ENCODE measurements at regions of chr17 and their contacts with region 1.

Region 1: DNA sequence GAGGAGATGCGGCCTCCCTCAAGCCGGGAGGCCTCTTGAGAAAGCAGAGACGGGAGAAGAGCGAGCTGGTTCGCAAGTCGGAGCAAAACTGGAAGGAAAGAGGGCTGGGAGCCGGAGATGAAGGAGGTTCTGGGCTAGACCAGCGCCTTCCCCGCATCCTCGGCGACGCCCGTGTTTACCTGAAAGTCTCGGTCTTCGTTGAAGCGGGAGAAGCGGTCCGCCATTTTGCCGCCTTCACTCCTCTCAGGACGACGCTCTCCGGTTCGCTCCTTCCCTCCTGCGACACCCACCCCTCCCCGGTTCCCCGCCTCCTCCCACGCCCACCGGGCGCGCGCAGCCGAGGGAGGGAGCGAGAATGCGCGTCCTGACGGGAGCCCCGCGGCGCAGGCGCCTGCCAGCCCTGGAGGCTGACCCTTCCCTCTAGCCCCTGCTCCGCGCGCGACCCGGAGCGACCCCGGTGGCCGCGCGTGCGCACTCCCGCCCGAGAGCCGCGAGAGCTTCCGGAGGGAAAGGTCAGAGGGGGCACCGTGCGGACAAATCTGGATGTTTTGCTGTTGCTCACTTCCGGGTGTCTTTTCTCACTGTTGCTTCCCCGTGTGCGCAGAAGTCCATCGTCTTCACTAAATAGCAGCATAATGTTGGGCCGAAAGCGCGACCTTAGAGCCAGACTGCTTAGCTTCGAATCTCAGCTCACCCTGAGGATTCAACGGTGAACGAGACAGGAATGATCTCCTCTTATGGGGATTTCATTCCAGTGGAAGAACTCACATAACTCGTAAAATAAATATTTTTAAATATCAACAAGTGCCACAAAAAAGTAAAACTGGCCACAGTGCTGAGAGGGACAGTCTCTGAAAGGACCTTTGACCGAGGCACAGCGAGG is at the start of gene GPATCH8:
- DNase-seq: peak; percentile 92 to 96 (median 95)
- H3K4me3 ChIP-seq: peak within 1 kb of the TSS; percentile 69 to 82 (median 75)
- H3K27ac ChIP-seq: peak within 1 kb of the TSS; percentile 18 to 94 (median 84)
- H3K4me1 ChIP-seq: peaks cover 18 to 47% of the 10 kb centered on the region in 2 donors
- H3K27me3 ChIP-seq: no peaks in the 10 kb centered on the region
- CTCF ChIP-seq: no peak
- POLR2A ChIP-seq: peak; percentile 10 to 78
- total RNA-seq, gene GPATCH8: 13.6 to 33.6 (median 29.3) TPM

Region 2: DNA sequence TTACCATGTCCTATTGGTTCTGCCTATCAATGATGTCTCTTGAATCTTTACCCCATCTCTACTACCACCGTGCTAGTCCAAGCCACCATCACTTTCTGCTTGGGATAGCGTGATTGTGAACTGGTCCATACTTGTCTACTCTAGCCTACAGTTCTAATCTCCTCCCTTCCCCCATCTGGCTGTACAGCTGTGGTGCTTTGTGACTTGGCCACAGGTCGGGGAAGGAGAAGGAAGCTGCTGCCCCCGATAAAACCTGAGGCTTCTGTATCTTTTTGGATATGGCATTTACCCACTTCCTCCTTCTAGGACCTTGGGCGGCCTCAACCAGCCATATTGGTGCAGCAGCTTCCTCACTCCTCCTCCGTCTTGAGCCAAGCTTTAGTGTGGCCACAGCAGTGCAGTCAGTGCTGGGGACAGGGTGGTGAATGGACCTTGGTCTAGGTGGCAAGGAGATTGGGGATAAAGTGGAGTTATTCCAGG is 113.6 kb before region 1 on chr17:
- intact Hi-C with region 1: loop called in 1 of 2 experiments (anchors 10 kb)
- DNase-seq: peak in 1 of 7 donors; percentile 10
- H3K4me3 ChIP-seq: no peak overlapping the region
- H3K27ac ChIP-seq: no peak overlapping the region
- H3K4me1 ChIP-seq: peaks cover 0 to 11% of the 10 kb centered on the region in 2 donors
- H3K27me3 ChIP-seq: peaks cover 4% of the 10 kb centered on the region
- CTCF ChIP-seq: no peak
- POLR2A ChIP-seq: no peak

Region 3: GRCh38 chr17:44438636-44439035 is 64.8 kb before region 1 on chr17:
- intact Hi-C with region 1: no loop called
- DNase-seq: peak in 1 of 7 donors; percentile 60
- H3K4me3 ChIP-seq: no peak overlapping the region
- H3K27ac ChIP-seq: no peak overlapping the region
- H3K4me1 ChIP-seq: peaks cover 0 to 10% of the 10 kb centered on the region in 2 donors
- H3K27me3 ChIP-seq: no peaks in the 10 kb centered on the region
- CTCF ChIP-seq: no peak
- POLR2A ChIP-seq: no peak

Region 4: DNA sequence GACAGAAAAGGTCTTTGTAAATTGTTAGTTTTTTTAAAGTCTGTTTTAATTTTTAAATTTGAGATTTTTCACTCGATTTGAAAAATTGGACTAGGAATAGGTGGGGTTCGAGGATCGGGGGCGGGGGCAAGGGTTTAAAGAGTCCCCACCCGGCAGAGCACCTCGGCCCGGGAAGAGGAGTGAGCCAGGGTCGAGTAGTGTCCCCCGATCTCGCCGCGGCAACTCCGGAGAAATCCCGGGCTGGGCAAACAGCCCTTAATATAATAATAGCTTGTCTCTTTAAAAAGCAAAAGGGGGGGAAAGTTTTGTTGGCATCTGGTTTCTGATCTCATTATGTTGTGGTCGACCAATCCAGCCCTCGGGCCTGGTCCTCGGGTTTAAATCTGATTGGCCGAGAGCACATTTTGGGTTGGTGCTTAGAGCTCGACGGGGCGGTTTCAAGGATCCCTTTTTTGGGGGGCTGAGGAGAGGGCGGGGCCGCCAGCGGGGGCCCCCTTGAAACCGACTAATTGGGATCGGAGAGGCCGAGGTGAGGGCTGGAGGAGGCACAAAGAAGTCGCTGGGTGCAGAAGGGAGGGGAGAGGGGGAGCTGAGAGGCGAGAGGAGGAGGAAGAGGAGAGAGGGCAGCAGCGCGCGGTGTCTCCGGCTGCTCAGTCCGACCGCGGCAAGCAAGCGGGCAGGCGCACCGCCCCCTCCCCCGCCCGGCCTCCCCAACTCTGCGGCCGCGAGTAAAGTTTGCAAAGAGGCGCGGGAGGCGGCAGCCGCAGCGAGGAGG is 53.6 kb after region 1 on chr17 and contains the start of gene FZD2:
- intact Hi-C with region 1: no loop called
- DNase-seq: peak; percentile 72 to 91 (median 82)
- H3K4me3 ChIP-seq: peak within 1 kb of the TSS; percentile 32 to 68 (median 49)
- H3K27ac ChIP-seq: peak within 1 kb of the TSS in 4 of 5 donors; percentile 53 to 73 (median 67)
- H3K4me1 ChIP-seq: no peaks in the 10 kb centered on the region
- H3K27me3 ChIP-seq: no peaks in the 10 kb centered on the region
- CTCF ChIP-seq: no peak
- POLR2A ChIP-seq: no peak
- total RNA-seq, gene FZD2: 1.1 to 9.1 (median 3.3) TPM

Region 5: GRCh38 chr17:44924107-44924544 is 420.7 kb after region 1 on chr17:
- intact Hi-C with region 1: no loop called
- DNase-seq: peak in 1 of 7 donors; percentile 4
- H3K4me3 ChIP-seq: no peak overlapping the region
- H3K27ac ChIP-seq: no peak overlapping the region
- H3K4me1 ChIP-seq: no peaks in the 10 kb centered on the region
- H3K27me3 ChIP-seq: no peaks in the 10 kb centered on the region
- CTCF ChIP-seq: no peak
- POLR2A ChIP-seq: no peak

Measured in adrenal gland (tissue), 19 donors.